ENCODE measurements at regions of chr9 and their contacts with region 1.

Region 1: GRCh38 chr9:21334701-21335632 is at the start of gene KLHL9:
- DNase-seq: peak; percentile 76
- H3K4me3 ChIP-seq: peak within 1 kb of the TSS; percentile 67
- CTCF ChIP-seq: no peak

Region 2: GRCh38 chr9:21281275-21281674 is 53.7 kb before region 1 on chr9:
- in situ Hi-C with region 1: no loop called
- DNase-seq: no peak
- H3K4me3 ChIP-seq: no peak overlapping the region
- CTCF ChIP-seq: no peak

Region 3: DNA sequence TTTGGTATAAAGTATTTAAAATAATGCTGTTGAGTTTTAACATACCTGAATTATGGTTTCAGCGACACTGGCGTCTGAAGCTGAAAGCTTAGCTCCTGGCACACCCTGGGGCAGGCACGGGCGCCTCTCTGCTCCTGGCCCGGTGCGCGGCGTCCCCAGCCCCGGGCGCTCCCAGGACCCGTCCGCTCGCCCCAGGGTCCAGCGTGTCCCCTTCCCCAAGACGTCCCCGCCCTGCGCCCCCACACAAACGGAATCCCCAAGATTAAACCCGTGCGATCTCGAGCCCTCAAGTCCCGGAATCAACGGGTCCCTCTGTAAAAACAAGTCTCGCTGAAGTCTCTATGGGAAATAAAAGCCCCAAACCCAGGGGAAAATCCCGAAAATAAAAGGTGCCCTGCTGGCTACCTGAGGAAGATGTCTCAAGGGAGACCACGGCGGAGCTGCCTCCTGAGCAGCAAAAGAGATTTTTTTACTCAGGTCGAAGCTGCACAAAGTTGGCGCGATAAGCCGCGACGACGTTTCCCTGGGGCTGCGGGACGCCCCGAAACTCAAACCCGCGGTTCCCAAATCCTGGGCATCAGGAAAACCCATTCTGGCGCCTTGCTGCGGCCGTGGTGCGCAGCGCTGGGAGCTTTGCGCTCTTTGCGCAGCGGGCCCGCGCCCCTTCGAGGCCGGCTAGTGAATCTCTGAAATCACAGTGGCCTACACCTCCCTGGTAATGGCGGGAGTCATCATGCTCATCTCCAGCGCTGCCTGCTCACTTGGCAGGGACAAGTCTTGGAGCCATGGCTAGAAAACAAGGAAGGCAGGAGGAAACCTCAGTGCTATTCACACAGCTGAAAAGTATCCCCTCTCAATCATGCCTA is 67.7 kb after region 1 on chr9:
- in situ Hi-C with region 1: loop called (anchors 5 kb)
- DNase-seq: no peak
- H3K4me3 ChIP-seq: peak overlapping the region; percentile 48
- CTCF ChIP-seq: no peak

Measured in astrocyte of the cerebellum (primary cell).